ENCODE measurements at regions of chr17 and their contacts with region 1.

Region 1: GRCh38 chr17:37818689-37819088 is 73.8 kb upstream of the HNF1B start:
- DNase-seq: no peak
- ATAC-seq: no peak
- H3K4me3 ChIP-seq: no peak overlapping the region
- H3K27ac ChIP-seq: no peak overlapping the region
- H3K4me1 ChIP-seq: no peaks in the 10 kb centered on the region
- H3K27me3 ChIP-seq: peaks cover 7 to 25% of the 10 kb centered on the region in 2 experiments
- CTCF ChIP-seq: no peak
- EP300 ChIP-seq: no peak
- POLR2A ChIP-seq: no peak
- RAD21 ChIP-seq: no peak

Region 2: GRCh38 chr17:37476431-37477120 is 342.1 kb before region 1 on chr17:
- CTCF ChIA-PET with region 1: no interaction called
- POLR2A ChIA-PET with region 1: no interaction called
- in situ Hi-C with region 1: no loop called
- intact Hi-C with region 1: no loop called
- DNase-seq: no peak
- ATAC-seq: no peak
- H3K4me3 ChIP-seq: no peak overlapping the region
- H3K27ac ChIP-seq: no peak overlapping the region
- H3K4me1 ChIP-seq: no peaks in the 10 kb centered on the region
- H3K27me3 ChIP-seq: no peaks in the 10 kb centered on the region
- CTCF ChIP-seq: no peak
- EP300 ChIP-seq: no peak
- POLR2A ChIP-seq: no peak
- RAD21 ChIP-seq: no peak

Region 3: DNA sequence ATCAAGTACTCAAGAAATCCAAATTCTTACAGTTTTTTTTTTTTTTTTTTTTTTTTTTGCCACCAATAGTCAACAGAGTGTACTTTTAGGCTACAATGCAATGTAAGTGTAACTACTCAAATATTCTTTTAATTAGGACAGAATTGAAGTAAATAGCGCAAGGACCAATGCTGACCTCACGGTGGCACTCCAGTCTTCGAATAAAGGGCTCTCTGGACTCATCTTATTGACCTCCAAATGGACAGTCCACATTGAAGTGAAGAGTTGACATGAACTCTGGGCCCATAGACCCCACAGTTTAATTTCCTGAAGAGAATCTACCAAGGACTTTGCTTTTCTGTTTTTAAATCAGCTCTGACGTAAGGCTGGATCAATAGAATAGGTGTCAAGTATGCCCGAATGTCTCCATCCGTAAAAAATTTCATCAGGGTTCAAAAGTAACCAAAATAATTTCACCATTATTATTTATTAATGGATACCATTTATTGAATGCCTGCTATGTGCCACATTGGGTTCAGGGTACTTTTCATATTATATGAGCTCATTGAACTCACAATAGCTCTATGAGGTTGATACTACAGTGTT is 168.2 kb before region 1 on chr17:
- CTCF ChIA-PET with region 1: no interaction called
- POLR2A ChIA-PET with region 1: no interaction called
- in situ Hi-C with region 1: no loop called
- intact Hi-C with region 1: loop called (anchors 2 kb)
- DNase-seq: peak in 3 of 4 experiments; percentile 22 to 55 (median 42)
- ATAC-seq: peak; percentile 85
- H3K4me3 ChIP-seq: no peak overlapping the region
- H3K27ac ChIP-seq: no peak overlapping the region
- H3K4me1 ChIP-seq: no peaks in the 10 kb centered on the region
- H3K27me3 ChIP-seq: peaks cover 0 to 9% of the 10 kb centered on the region in 2 experiments; a peak in 4 of 5 replicates
- CTCF ChIP-seq: peak; percentile 51 to 78 (median 61)
- EP300 ChIP-seq: no peak
- POLR2A ChIP-seq: no peak
- RAD21 ChIP-seq: peak; percentile 34 to 66; a peak in 2 of 4 replicates

Region 4: GRCh38 chr17:37701496-37701898 is 117.2 kb before region 1 on chr17:
- CTCF ChIA-PET with region 1: no interaction called
- POLR2A ChIA-PET with region 1: no interaction called
- in situ Hi-C with region 1: no loop called
- intact Hi-C with region 1: loop called (anchors 5 kb)
- DNase-seq: peak; percentile 41 to 59 (median 56)
- ATAC-seq: peak; percentile 79
- H3K4me3 ChIP-seq: no peak overlapping the region
- H3K27ac ChIP-seq: no peak overlapping the region
- H3K4me1 ChIP-seq: no peaks in the 10 kb centered on the region
- H3K27me3 ChIP-seq: peaks cover 2 to 43% of the 10 kb centered on the region in 2 experiments
- CTCF ChIP-seq: peak; percentile 64 to 82 (median 79)
- EP300 ChIP-seq: no peak
- POLR2A ChIP-seq: no peak
- RAD21 ChIP-seq: peak; percentile 38 to 65

Region 5: DNA sequence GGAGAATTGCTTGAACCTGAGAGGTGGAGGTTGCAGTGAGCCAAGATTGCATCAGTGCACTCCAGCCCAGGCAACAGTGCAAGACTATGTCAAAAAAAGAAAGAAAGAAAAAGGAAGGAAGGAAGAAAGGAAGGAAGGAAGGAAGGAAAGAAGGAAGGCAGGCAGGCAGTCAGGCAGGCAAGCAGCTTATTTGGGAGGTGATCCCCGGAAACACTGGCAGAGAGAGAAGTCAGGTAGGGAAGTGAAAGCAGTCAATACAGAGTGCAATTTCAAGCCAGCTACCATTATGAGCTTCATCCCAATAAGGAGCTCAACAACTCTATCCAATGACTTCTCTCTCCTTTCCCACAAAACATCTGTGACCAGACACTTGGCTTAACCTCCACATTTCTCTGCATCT is 22.5 kb after region 1 on chr17:
- CTCF ChIA-PET with region 1: no interaction called
- POLR2A ChIA-PET with region 1: no interaction called
- in situ Hi-C with region 1: no loop called
- intact Hi-C with region 1: no loop called
- DNase-seq: no peak
- ATAC-seq: no peak
- H3K4me3 ChIP-seq: no peak overlapping the region
- H3K27ac ChIP-seq: no peak overlapping the region
- H3K4me1 ChIP-seq: peaks cover 2 to 7% of the 10 kb centered on the region in 2 experiments; a peak in 2 of 5 replicates
- H3K27me3 ChIP-seq: peaks cover 38 to 59% of the 10 kb centered on the region in 2 experiments
- CTCF ChIP-seq: no peak
- EP300 ChIP-seq: no peak
- POLR2A ChIP-seq: no peak
- RAD21 ChIP-seq: no peak

Region 6: DNA sequence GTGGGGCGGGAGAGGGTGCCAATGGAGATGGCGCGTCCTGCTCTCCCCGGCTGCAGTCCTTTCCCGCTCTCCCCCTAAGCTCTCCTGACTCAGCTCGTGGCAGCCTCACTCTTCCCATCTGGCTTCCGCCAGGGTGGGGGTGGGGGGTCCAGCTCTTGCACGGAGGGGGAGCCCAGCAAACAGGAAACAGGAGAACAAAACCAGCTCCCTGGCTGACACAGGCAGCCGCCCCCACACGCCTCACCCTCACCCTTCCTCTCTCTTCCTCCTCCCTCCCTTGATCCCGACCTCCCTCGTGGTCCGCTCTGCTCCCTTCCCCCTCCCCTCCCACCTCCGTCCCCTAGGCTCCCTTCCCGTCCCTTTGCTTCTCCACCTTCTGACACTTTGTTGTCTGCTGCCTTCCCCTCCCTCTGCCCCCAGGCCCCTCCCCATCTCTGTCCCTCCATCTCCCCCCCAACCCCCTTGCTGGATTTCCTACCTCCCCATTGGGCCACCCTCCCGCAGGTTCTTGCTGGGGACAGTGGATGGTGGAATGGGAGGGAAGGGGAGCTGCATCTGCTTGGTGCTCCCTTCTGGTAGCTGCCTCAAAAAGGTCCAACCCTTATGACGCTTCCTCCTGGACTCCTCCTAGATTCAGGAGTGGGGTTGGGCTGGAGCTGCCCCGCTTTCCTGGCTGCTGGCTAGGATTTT is 633.3 kb after region 1 on chr17:
- CTCF ChIA-PET with region 1: no interaction called
- POLR2A ChIA-PET with region 1: no interaction called
- in situ Hi-C with region 1: no loop called
- intact Hi-C with region 1: no loop called
- DNase-seq: peak in 3 of 4 experiments; percentile 28 to 41 (median 39)
- ATAC-seq: no peak
- H3K4me3 ChIP-seq: no peak overlapping the region
- H3K27ac ChIP-seq: no peak overlapping the region
- H3K4me1 ChIP-seq: peaks cover 6 to 17% of the 10 kb centered on the region in 2 experiments; a peak in 4 of 5 replicates
- H3K27me3 ChIP-seq: peaks cover 7 to 66% of the 10 kb centered on the region in 2 experiments; a peak in 3 of 5 replicates
- CTCF ChIP-seq: no peak
- EP300 ChIP-seq: no peak
- POLR2A ChIP-seq: no peak
- RAD21 ChIP-seq: no peak

Measured in K562 (cell line).